Activated CD4-positive, alpha-beta T cell treated with anti-CD3 and anti-CD28 coated beads, Interleukin-2, amount 10 ng/mL, durations not matched to agents 24 days and 14 days (primary cell): ENCODE measurements at regions of chr12 and their contacts with region 1.

Region 1: GRCh38 chr12:39692258-39692853 is 72.8 kb upstream of the ABCD2 start:
- DNase-seq: no peak
- H3K4me3 Mint-ChIP-seq: no peak overlapping the region
- H3K27ac Mint-ChIP-seq: no peak overlapping the region
- H3K4me1 Mint-ChIP-seq: peaks cover 1% of the 10 kb centered on the region
- H3K27me3 Mint-ChIP-seq: peaks cover 7% of the 10 kb centered on the region

Region 2: DNA sequence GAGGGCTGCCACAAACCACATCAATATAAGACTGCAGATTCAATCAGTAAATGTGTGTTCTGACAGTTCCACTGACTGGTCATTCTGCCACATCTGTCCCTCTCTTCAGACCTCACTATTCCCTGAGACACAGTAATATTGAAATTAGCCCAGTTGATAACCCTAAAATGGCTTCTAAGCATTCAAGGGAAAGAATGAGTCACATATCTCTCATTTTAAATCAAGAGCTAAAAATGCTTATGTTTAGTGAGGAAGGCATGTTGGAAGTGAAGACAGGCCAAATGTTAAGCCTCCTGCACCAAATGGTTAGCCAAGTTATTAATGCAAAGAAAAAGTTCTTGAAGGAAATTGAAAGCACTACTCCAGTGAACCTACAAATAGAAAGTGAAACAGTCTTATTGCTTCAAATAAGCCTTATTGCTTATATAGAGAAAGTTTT is 224.9 kb before region 1 on chr12:
- intact Hi-C with region 1: loop called (anchors 10 kb)
- DNase-seq: no peak
- H3K4me3 Mint-ChIP-seq: peak overlapping the region; percentile 48
- H3K27ac Mint-ChIP-seq: peak overlapping the region; percentile 13
- H3K4me1 Mint-ChIP-seq: peaks cover 16% of the 10 kb centered on the region
- H3K27me3 Mint-ChIP-seq: no peaks in the 10 kb centered on the region

Region 3: DNA sequence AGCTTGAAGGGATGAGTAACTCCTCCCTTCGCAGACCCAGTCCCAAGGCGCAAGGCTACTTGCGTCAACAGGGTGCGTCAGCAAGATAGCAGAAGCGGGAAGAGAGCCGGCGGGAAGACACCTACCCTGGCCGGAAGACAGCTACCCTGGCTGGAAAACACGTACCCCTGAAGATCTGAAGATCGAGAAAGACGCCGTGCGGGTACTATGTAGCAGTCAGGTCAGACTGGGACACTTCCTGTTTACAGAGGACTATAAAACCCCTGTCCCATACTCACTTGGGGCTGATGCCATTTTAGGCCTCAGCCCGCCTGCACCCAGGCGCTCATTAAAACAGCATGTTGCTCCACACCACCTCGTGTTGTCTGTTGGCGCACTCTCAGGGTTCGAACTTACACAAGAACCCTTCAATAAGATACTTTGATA is 153.7 kb before region 1 on chr12:
- intact Hi-C with region 1: no loop called
- DNase-seq: no peak
- H3K4me3 Mint-ChIP-seq: no peak overlapping the region
- H3K27ac Mint-ChIP-seq: no peak overlapping the region
- H3K4me1 Mint-ChIP-seq: peaks cover 2% of the 10 kb centered on the region
- H3K27me3 Mint-ChIP-seq: no peaks in the 10 kb centered on the region

Region 4: GRCh38 chr12:39587225-39587624 is 105.1 kb before region 1 on chr12:
- intact Hi-C with region 1: loop called (anchors 1 kb)
- DNase-seq: peak; percentile 66
- H3K4me3 Mint-ChIP-seq: no peak overlapping the region
- H3K27ac Mint-ChIP-seq: no peak overlapping the region
- H3K4me1 Mint-ChIP-seq: peaks cover 12% of the 10 kb centered on the region
- H3K27me3 Mint-ChIP-seq: no peaks in the 10 kb centered on the region